IMR-90 (cell line): ENCODE measurements at regions of chr14 and their contacts with region 1.

Region 1: DNA sequence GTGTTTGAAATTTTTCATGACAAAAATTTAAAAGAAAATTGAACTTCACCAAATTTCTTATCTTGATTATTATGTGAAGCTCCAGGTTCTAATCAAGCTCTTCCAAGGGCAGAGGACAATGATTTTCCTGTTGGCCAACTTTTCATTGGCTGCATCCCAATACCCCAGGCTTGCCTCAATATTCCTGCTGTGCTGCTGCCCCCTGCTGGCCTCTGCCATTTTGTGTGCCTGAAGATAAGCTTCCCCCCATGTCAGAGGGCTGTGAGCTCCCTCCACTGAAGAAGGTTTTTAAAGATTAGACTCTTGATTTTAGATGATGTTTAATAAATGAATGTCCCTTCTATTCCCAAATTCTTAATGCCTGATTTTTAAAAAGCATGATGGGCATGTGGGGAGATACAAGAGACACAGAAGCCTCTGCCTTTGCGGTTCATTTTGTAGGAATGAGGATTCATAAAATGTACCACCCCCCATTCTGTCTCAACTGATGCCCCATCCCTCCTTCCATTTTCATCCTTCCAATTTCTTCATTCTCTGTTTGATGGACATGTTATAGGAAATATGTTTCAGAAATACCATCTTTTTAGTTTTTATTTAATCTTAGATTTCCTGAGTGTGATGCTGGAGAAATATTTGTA is 76.7 kb upstream of the RGS6 start:
- DNase-seq: peak; percentile 68
- ATAC-seq: peak; percentile 75
- H3K4me3 ChIP-seq: no peak overlapping the region
- H3K27ac ChIP-seq: no peak overlapping the region
- H3K4me1 ChIP-seq: no peaks in the 10 kb centered on the region
- H3K27me3 ChIP-seq: no peaks in the 10 kb centered on the region; the same call in 1 of the 2 replicates
- CTCF ChIP-seq: peak; percentile 84
- POLR2A ChIP-seq: no peak
- RAD21 ChIP-seq: peak; percentile 86

Region 2: GRCh38 chr14:71138448-71139293 is 716.8 kb before region 1 on chr14:
- CTCF ChIA-PET with region 1: interaction called, 3 read pairs
- POLR2A ChIA-PET with region 1: no interaction called
- dilution Hi-C with region 1: no loop called
- in situ Hi-C with region 1: loop called (anchors 10 kb)
- intact Hi-C with region 1: loop called (anchors 1 kb)
- DNase-seq: peak; percentile 48
- ATAC-seq: peak; percentile 73
- H3K4me3 ChIP-seq: no peak overlapping the region
- H3K27ac ChIP-seq: no peak overlapping the region
- H3K4me1 ChIP-seq: peaks cover 16% of the 10 kb centered on the region
- H3K27me3 ChIP-seq: no peaks in the 10 kb centered on the region
- CTCF ChIP-seq: peak; percentile 86
- POLR2A ChIP-seq: peak; percentile 57; the same call in 1 of the 2 replicates
- RAD21 ChIP-seq: peak; percentile 97

Region 3: GRCh38 chr14:71554959-71555612 is 300.4 kb before region 1 on chr14:
- CTCF ChIA-PET with region 1: no interaction called
- POLR2A ChIA-PET with region 1: no interaction called
- dilution Hi-C with region 1: no loop called
- in situ Hi-C with region 1: no loop called
- intact Hi-C with region 1: loop called (anchors 5 kb)
- DNase-seq: no peak
- ATAC-seq: no peak
- H3K4me3 ChIP-seq: no peak overlapping the region
- H3K27ac ChIP-seq: no peak overlapping the region
- H3K4me1 ChIP-seq: peaks cover 10% of the 10 kb centered on the region
- H3K27me3 ChIP-seq: no peaks in the 10 kb centered on the region
- CTCF ChIP-seq: no peak
- POLR2A ChIP-seq: no peak
- RAD21 ChIP-seq: no peak

Region 4: GRCh38 chr14:71753126-71753830 is 102.2 kb before region 1 on chr14:
- CTCF ChIA-PET with region 1: interaction called, 15 read pairs
- POLR2A ChIA-PET with region 1: no interaction called
- dilution Hi-C with region 1: no loop called
- in situ Hi-C with region 1: no loop called
- intact Hi-C with region 1: loop called (anchors 1 kb)
- DNase-seq: peak; percentile 85
- ATAC-seq: peak; percentile 90
- H3K4me3 ChIP-seq: no peak overlapping the region; the same call in 1 of the 2 replicates
- H3K27ac ChIP-seq: no peak overlapping the region
- H3K4me1 ChIP-seq: peaks cover 4% of the 10 kb centered on the region; the same call in 1 of the 2 replicates
- H3K27me3 ChIP-seq: no peaks in the 10 kb centered on the region
- CTCF ChIP-seq: peak; percentile 97
- POLR2A ChIP-seq: peak; percentile 64
- RAD21 ChIP-seq: peak; percentile 100